HepG2 (cell line): ENCODE measurements at regions of chr7 and their contacts with region 1.

Region 1: GRCh38 chr7:332646-333392 is 42.8 kb downstream of the FOXL3 start:
- DNase-seq: peak; percentile 60
- ATAC-seq: peak; percentile 95
- H3K4me3 ChIP-seq: peak overlapping the region; percentile 36 to 65 (median 47)
- H3K27ac ChIP-seq: peak overlapping the region; percentile 59
- H3K4me1 ChIP-seq: peaks cover 29% of the 10 kb centered on the region
- H3K27me3 ChIP-seq: peaks cover 1 to 9% of the 10 kb centered on the region in 2 experiments; a peak in 4 of 5 replicates
- CTCF ChIP-seq: peak; percentile 93
- EP300 ChIP-seq: no peak
- POLR2A ChIP-seq: no peak
- RAD21 ChIP-seq: peak; percentile 97

Region 2: DNA sequence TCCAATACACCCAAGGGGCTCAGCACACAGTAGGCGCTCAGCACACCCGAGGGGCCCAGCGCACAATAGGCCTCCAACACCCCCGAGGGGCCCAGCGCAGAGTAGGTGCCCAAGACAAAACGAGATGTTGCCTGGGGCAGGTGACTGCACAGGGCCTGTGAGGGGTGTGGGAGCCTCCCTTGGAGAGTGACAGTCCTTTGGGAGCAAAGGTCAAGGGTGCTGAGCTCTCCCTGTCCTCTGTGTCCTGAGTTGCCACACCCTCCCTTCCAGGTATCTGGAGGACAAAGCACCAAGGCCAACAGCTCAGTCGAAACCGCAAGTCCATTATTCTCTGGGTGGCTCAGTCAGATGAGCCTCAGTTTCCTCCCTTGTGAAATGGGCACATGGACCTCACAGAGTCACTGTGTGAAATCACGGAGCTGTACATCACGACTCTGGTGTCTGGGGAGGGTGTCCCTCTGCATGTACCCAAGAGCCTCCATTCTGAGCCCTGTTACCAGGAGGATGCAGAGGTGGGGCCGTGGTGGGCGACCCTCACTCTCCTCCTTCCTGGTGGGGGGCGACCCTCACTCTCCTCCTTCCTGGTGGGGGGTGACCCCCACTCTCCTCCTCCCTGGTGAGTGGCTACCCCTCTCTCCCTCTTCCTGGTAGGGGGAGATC is 38.4 kb after region 1 on chr7:
- CTCF ChIA-PET with region 1: no interaction called
- POLR2A ChIA-PET with region 1: interaction called, 6 read pairs
- in situ Hi-C with region 1: no loop called
- intact Hi-C with region 1: loop called (anchors 5 kb)
- DNase-seq: peak; percentile 90
- ATAC-seq: peak; percentile 72
- H3K4me3 ChIP-seq: no peak overlapping the region
- H3K27ac ChIP-seq: no peak overlapping the region
- H3K4me1 ChIP-seq: peaks cover 68% of the 10 kb centered on the region
- H3K27me3 ChIP-seq: peaks cover 12 to 27% of the 10 kb centered on the region in 2 experiments; a peak in 4 of 5 replicates
- CTCF ChIP-seq: 0 out of 2 replicates have a peak, but pooled peaks have one; percentile 11
- EP300 ChIP-seq: peak in 1 of 2 experiments; percentile 70; a peak in 1 of 4 replicates
- POLR2A ChIP-seq: no peak
- RAD21 ChIP-seq: 0 out of 2 replicates have a peak, but pooled peaks have one; percentile 13

Region 3: DNA sequence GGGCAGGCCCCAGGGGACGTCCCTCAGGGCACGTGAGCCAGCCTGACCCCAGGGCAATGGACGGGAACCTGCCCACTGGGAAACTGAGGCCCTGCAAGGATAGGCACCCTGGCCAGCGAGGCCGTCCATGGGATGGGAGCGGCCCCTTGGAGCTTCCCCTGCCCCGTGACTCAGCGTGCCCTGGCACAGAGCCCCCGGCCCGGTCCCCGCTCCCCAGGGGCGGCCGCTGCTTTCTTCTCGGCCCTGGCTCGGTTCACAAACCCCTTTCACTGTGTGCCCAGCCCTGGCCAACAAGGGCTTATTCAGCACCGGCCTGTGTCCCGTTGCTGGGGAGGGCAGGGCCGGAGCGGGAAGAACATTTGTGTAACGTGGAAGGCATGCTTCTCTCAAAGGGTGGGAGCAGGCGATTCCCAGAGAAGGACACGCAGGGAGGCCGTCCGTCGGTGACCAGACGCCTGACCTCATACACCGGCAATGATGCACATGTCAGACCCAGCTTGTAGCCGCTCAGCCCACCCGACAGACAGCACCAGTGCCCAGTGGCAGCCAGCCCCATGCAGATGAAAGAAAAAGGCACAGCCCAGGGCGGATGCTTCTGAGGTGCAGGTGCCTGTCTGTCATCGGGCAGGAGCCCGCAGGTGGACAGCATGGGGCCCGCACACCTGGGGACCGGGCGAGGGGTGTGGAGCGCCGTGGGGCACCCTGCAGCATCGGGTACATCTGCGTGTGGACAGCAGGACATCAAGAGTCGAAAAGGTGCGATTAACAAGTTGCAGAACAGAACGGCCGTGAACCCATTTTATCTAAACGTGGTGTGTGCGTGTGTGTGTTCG is 92.4 kb after region 1 on chr7:
- CTCF ChIA-PET with region 1: no interaction called
- POLR2A ChIA-PET with region 1: no interaction called
- in situ Hi-C with region 1: loop called (anchors 5 kb)
- intact Hi-C with region 1: loop called (anchors 1 kb)
- DNase-seq: no peak
- ATAC-seq: no peak
- H3K4me3 ChIP-seq: no peak overlapping the region
- H3K27ac ChIP-seq: no peak overlapping the region
- H3K4me1 ChIP-seq: peaks cover 10% of the 10 kb centered on the region
- H3K27me3 ChIP-seq: peaks cover 20 to 53% of the 10 kb centered on the region in 2 experiments; a peak in 4 of 5 replicates
- CTCF ChIP-seq: no peak
- EP300 ChIP-seq: no peak
- POLR2A ChIP-seq: no peak
- RAD21 ChIP-seq: no peak

Region 4: DNA sequence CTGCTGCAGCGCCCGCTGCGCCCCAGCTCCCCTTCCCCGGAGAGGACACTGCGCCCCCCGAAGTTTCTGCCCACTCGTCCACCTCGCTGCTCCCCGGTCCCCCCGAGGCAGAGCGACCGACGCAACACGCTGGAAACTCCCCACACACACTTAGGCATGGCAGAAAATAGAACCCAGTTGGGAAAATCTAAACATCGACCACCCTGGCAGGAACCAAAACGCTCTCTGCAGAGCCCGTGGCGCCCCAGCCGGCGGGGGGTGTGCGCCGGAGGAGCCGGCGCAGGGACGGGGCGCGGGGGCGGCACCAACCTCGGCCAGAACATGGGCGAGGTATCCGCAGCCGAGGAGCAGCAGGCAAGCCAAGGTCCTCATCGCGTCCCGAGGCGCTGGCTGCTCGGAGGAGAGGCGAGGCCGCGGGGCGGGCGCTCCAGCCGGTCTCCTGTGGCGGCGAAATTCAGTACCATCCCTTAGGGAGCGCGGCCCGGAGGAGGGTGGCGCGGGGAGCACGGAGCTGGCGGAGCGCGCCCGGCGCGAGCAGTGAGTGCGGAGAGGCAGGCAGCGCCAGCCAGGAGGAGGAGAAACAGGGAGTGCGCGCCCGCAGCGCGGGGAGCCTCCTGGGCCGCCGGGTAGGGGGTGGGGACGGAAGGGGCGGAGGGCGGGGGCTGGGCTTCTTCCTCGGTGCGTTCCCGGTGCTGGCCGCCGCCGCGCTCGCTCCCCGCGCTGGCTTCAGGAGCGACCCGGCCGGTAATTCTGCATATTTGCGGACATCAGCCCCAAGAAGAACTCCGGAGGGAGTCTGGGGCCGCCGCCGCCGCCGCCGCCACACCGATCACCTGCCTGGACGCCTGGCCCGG is 186.0 kb after region 1 on chr7:
- CTCF ChIA-PET with region 1: no interaction called
- POLR2A ChIA-PET with region 1: no interaction called
- in situ Hi-C with region 1: no loop called
- intact Hi-C with region 1: loop called (anchors 5 kb)
- DNase-seq: no peak
- ATAC-seq: peak; percentile 24
- H3K4me3 ChIP-seq: peak overlapping the region; percentile 52 to 71 (median 59); a peak in 5 of 6 replicates
- H3K27ac ChIP-seq: no peak overlapping the region
- H3K4me1 ChIP-seq: peaks cover 9% of the 10 kb centered on the region; the same call in 1 of the 2 replicates
- H3K27me3 ChIP-seq: peaks cover 20 to 59% of the 10 kb centered on the region in 2 experiments; a peak in 4 of 5 replicates
- CTCF ChIP-seq: no peak
- EP300 ChIP-seq: no peak
- POLR2A ChIP-seq: no peak
- RAD21 ChIP-seq: no peak

Region 5: GRCh38 chr7:732094-732541 is 399.3 kb after region 1 on chr7:
- CTCF ChIA-PET with region 1: no interaction called
- POLR2A ChIA-PET with region 1: interaction called, 3 read pairs
- in situ Hi-C with region 1: no loop called
- intact Hi-C with region 1: loop called (anchors 5 kb)
- DNase-seq: peak; percentile 86
- ATAC-seq: peak; percentile 98
- H3K4me3 ChIP-seq: no peak overlapping the region; a peak in 1 of 6 replicates
- H3K27ac ChIP-seq: peak overlapping the region; percentile 49
- H3K4me1 ChIP-seq: peaks cover 61% of the 10 kb centered on the region
- H3K27me3 ChIP-seq: no peaks in the 10 kb centered on the region
- CTCF ChIP-seq: peak; percentile 98
- EP300 ChIP-seq: peak; percentile 28 to 38; a peak in 2 of 4 replicates
- POLR2A ChIP-seq: peak in 1 of 2 experiments; percentile 54; a peak in 2 of 4 replicates
- RAD21 ChIP-seq: peak; percentile 82